ENCODE measurements at regions of chr12 and their contacts with region 1.

Region 1: GRCh38 chr12:48084066-48084465 is 21.8 kb downstream of the SENP1 start:
- DNase-seq: no peak
- H3K4me3 ChIP-seq: no peak overlapping the region
- H3K27ac ChIP-seq: no peak overlapping the region
- H3K4me1 ChIP-seq: no peaks in the 10 kb centered on the region
- H3K27me3 ChIP-seq: no peaks in the 10 kb centered on the region
- CTCF ChIP-seq: peak; percentile 24 to 46 (median 35)

Region 2: DNA sequence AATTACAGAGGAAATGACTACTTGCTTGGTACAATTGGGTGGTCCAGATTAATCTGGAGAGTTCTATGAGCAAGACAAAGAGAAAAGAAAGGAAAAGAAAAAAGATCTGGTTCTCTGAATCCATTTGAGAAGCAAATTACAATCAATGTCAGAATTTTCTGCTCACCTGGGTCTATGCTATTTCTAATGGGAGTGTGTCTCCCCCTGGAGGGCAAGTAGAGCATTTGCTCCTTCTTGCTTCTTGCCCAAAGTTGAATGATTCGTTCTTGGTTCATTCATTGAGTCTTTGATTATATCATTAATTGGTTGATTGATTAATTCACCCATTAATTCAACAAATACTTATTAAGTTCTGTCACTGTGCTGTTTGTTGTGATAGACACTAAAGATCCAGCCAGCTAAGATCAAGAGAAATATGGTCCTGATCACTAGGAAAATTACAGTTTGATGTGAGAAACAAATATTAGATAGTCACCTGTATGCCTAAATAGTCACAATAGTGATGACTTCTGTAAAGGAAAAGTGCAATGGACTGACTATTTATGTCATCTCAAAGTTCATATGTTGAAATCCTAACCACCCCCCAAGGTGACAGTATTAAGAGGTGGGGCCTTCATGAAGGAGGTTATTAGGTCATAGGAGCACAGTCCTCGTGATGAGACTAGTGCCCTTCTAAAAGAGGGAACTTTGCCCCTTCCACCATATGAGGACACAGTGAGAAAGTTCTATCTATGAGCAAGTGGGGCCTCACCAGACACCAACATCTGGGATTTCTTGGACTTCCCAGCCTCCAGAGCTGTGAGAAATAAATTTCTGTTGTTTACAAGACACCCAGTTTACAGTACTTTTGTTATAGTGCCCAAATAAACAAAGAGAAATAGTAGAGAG is 81.3 kb after region 1 on chr12:
- intact Hi-C with region 1: loop called (anchors 1 kb)
- DNase-seq: no peak
- H3K4me3 ChIP-seq: no peak overlapping the region
- H3K27ac ChIP-seq: no peak overlapping the region
- H3K4me1 ChIP-seq: no peaks in the 10 kb centered on the region
- H3K27me3 ChIP-seq: no peaks in the 10 kb centered on the region
- CTCF ChIP-seq: peak; percentile 60 to 90 (median 81)

Region 3: DNA sequence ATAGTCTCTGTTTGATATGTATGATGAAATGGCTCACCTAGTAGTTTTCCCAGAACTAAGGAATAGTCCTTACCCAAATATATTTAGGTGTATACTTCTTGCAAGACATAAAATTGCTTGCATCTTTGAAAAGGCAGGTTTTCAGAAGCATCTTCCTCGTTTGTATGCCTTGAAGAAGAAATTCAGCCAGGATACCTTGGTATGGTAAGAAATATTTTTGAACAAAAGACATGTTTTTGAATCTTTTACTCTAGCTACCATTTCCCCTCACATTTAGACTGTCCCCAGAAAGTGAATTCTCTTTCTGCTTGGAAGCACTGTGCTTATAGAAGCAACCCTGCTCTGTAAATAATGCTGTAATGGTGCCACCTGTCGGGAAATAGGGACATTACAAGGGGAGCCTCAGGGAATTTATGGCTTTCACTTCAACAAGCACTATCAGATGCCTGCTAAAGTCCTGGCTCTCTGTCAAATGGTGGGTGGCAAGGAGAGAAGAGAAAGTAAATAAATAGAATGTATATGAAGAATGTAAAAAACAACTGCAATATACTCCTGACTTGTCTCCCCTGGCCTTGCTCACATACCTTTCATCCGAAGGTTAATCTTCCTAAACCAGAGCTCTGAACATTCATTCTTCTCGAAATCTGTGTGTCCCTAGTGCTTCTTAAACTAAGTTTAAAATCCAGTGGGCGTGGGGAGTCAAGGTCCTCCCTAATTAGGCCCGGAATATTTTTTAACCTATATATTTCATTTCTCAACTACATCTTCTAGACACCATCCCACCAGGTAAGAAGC is 105.5 kb after region 1 on chr12:
- intact Hi-C with region 1: loop called (anchors 2 kb)
- DNase-seq: peak in 1 of 2 donors; percentile 85
- H3K4me3 ChIP-seq: no peak overlapping the region
- H3K27ac ChIP-seq: no peak overlapping the region
- H3K4me1 ChIP-seq: peaks cover 0 to 3% of the 10 kb centered on the region in 2 donors
- H3K27me3 ChIP-seq: no peaks in the 10 kb centered on the region
- CTCF ChIP-seq: peak; percentile 73 to 85 (median 84)